Psoas muscle (tissue), 8 donors: ENCODE measurements at regions of chr1 and their contacts with region 1.

Region 1: DNA sequence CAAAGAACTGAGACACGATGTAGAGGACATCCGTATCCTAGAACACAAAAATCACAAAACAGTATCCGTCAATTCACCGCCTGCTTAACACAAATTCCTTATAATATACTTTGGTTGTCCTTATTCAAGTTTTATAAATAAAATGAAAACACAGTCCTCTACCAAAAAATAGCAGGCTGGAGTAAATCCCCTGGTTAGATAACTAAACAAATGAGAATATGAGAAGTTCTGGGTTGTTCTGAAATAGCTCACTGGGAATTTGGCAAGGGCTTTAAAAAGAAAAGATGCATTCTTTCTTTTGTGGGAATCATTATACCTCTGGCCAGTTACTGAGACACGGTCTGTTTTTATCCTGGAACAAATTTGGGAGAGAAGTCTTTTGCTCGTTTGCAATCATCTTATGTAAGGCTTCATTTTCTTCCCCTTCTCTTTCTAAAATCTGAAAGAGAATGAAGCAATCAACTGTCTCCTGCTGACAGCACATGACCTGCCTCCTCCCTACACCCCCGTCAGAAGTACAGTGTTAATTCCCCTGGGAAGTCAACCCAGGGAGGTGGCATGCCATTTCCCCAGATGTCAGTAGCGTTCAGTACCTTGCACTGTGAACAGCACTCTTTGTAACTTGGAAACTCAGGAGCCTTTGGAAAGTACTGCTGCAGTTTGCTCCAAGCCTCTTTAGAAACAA is 37.1 kb upstream of the RAP1GAP start:
- DNase-seq: no peak
- ATAC-seq: peak in 3 of 4 donors; percentile 45 to 59 (median 46)
- H3K4me3 ChIP-seq: no peak overlapping the region
- H3K27ac ChIP-seq: no peak overlapping the region
- H3K4me1 ChIP-seq: no peaks in the 10 kb centered on the region
- H3K27me3 ChIP-seq: no peaks in the 10 kb centered on the region
- CTCF ChIP-seq: no peak

Region 2: GRCh38 chr1:21742578-21742977 is 36.3 kb after region 1 on chr1:
- intact Hi-C with region 1: loop called in 1 of 2 experiments (anchors 2 kb)
- DNase-seq: no peak
- ATAC-seq: peak in 3 of 4 donors; percentile 42 to 45 (median 43)
- H3K4me3 ChIP-seq: no peak overlapping the region
- H3K27ac ChIP-seq: no peak overlapping the region
- H3K4me1 ChIP-seq: no peaks in the 10 kb centered on the region
- H3K27me3 ChIP-seq: no peaks in the 10 kb centered on the region
- CTCF ChIP-seq: no peak

Region 3: DNA sequence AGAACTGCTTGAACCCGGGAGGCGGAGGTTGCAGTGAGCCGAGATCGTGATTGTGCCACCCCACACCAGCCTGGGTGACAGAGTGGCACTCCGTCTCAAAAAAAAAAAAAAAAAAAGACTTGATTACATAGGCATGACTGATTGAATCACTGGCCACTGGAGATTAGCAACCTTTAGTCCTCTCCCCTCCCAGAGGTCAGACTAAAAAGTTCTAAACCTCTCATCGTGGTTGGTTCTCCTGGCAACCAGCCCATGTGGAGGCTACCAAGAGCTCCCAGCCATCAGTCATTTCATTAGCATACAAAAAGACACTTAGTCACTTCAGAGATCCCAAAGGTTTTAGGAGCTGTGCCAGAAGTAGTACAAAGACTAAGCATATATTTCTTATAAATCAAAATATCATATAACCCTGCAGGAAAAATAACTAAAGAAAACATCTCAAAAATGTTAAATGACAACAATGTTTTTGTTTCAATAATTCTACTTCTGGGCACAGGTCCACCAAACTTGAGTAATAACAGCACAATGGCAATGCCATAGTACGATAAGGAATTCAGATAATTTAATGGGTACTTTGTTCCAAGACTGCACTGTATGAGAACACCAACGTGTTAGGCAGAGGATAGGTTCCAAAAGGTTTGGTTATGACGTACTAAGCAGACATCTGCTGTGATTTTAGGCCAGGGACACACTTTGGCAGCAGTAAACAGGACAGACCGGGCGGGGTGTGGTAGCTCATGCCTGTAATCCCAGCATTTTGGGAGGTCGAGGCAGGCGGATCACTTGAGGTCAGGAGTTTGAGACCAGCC is 58.5 kb after region 1 on chr1:
- intact Hi-C with region 1: no loop called
- DNase-seq: peak; percentile 65 to 67
- ATAC-seq: peak; percentile 53 to 74 (median 67)
- H3K4me3 ChIP-seq: no peak overlapping the region
- H3K27ac ChIP-seq: peak overlapping the region; percentile 67
- H3K4me1 ChIP-seq: peaks cover 14% of the 10 kb centered on the region
- H3K27me3 ChIP-seq: no peaks in the 10 kb centered on the region
- CTCF ChIP-seq: no peak

Region 4: GRCh38 chr1:21801100-21801499 is 94.8 kb after region 1 on chr1:
- intact Hi-C with region 1: no loop called
- DNase-seq: no peak
- ATAC-seq: no peak
- H3K4me3 ChIP-seq: no peak overlapping the region
- H3K27ac ChIP-seq: no peak overlapping the region
- H3K4me1 ChIP-seq: no peaks in the 10 kb centered on the region
- H3K27me3 ChIP-seq: no peaks in the 10 kb centered on the region
- CTCF ChIP-seq: no peak

Region 5: DNA sequence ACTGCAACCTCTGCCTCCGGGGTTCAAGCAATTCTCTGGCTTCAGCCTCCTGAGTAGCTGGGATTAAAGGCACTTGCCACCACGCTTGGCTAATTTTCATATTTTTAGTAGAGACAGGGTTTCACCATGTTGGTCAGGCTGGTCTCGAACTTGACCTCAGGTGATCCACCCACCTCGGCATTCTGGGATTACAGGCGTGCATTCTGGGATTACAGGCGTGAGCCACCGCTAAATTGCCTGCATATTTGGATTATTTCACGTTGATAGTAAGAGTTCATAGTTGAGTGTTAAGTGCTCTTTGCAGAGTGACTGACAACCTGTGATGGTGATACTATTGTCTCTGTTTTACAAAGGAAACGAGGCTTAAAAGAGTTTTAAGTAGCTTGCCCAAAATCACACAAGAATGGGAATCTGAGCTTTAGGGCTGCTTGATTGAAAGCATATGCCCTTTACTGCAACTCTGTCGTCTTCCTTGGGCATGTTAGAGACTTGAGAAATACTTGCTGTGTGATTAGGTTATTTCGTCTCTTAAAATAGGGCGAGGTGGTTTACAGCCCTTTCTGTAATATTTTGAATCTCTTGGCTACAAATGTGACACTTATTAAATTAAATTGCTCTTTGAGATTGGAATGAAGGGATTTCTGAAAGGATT is 358.6 kb after region 1 on chr1:
- intact Hi-C with region 1: no loop called
- DNase-seq: no peak
- ATAC-seq: no peak
- H3K4me3 ChIP-seq: peak overlapping the region; percentile 22
- H3K27ac ChIP-seq: no peak overlapping the region
- H3K4me1 ChIP-seq: peaks cover 84% of the 10 kb centered on the region
- H3K27me3 ChIP-seq: no peaks in the 10 kb centered on the region
- CTCF ChIP-seq: no peak

Region 6: DNA sequence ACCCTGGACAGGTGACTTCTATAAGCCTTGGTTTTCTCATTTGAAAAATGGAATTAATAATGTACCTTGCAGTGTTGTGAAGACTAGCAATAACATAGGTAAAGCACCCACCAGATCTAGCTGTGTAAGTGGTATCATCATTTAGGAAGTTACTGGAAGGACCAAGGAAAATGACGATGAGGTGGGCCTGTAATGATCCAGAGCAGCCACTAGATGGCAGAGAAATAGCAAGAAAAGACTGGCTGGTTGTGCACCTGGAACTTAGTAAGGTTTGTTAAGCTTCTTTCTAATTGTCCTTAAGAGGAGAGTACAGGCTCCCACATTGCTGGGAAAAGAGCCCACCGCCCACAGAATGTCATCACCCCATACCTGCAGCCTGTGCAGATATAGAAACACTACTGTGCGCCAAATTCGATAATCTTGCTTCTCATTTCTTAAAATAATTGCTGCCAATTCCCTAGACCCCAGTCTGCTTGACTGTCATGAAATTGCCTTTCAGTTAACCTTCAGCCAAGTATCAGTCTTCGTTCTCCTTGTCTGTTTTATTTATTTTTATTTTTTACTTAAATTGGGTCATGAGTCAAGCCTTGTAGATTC is 399.4 kb after region 1 on chr1:
- intact Hi-C with region 1: no loop called
- DNase-seq: no peak
- ATAC-seq: peak; percentile 59 to 79 (median 74)
- H3K4me3 ChIP-seq: no peak overlapping the region
- H3K27ac ChIP-seq: no peak overlapping the region
- H3K4me1 ChIP-seq: peaks cover 10% of the 10 kb centered on the region
- H3K27me3 ChIP-seq: no peaks in the 10 kb centered on the region
- CTCF ChIP-seq: peak; percentile 84